Caco-2 (cell line): ENCODE measurements at regions of chr4 and their contacts with region 1.

Region 1: GRCh38 chr4:186021461-186022167 is 47.3 kb upstream of the TLR3 start:
- DNase-seq: peak in 1 of 2 experiments; percentile 23
- H3K4me3 ChIP-seq: no peak overlapping the region
- H3K4me3 Mint-ChIP-seq: no peak overlapping the region
- H3K27ac Mint-ChIP-seq: no peak overlapping the region
- H3K4me1 ChIP-seq: no peaks in the 10 kb centered on the region
- H3K4me1 Mint-ChIP-seq: peaks cover 6% of the 10 kb centered on the region
- H3K27me3 ChIP-seq: no peaks in the 10 kb centered on the region
- H3K27me3 Mint-ChIP-seq: no peaks in the 10 kb centered on the region
- CTCF ChIP-seq: peak; percentile 74 to 75

Region 2: DNA sequence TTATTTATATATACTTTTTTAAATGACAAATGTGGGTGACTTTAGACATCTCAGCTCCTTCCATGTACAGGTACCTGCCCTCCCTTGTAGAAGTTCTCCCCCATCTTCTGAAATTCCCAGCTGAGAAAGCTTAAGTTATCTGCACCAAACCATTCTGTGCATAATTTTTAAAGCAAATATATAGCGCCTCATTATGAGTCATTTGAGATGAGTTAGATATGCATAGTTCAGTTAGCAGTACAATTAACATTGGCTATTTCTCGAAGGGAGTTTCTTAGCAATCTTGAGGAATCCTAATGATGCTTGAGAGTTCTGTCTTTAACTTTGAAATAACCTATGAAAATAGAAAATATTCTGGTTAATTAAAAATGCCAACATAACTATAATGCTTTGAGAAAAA is 576.4 kb before region 1 on chr4:
- CTCF ChIA-PET with region 1: no interaction called
- POLR2A ChIA-PET with region 1: no interaction called
- intact Hi-C with region 1: no loop called
- DNase-seq: no peak
- H3K4me3 ChIP-seq: no peak overlapping the region
- H3K4me3 Mint-ChIP-seq: no peak overlapping the region
- H3K27ac Mint-ChIP-seq: no peak overlapping the region
- H3K4me1 ChIP-seq: no peaks in the 10 kb centered on the region
- H3K4me1 Mint-ChIP-seq: no peaks in the 10 kb centered on the region
- H3K27me3 ChIP-seq: no peaks in the 10 kb centered on the region
- H3K27me3 Mint-ChIP-seq: peaks cover 4% of the 10 kb centered on the region
- CTCF ChIP-seq: no peak

Region 3: DNA sequence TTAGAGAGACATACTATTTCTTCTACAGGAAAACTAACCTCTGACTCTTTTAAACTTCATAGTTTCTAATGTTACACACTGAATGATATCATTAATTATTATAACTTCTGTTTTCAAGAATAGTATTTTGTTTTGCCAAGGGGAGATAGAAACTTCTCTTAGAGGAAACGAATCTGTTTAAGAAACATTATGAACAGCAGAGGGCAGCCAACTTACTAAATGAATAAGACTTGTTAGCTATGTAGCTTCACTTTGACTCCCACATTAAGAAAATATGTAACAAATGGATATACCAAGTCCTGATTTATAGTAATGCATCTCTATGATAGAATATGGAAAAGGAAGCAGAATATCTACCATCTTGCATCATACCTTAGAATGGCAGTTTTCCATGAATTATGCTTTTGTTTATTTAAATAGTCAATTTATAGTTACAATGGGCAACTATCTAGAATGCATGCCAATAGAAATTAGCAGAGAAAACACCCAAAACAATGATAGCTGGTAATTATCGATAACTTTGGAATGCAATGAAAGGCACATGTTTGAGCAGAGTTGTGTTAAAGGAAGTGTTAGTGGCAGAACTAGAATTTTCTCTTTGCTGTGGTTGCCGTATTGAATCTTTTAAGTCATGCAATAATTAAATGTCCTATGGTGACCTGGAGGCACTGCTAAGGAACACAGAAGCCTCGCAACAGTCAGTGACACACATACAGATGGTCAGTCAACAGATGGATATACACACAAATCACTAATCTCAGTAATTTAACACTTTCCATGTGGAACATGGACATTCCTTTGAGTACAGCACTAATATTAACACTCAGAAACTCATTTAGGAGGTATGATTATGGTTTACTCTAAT is 380.6 kb before region 1 on chr4:
- CTCF ChIA-PET with region 1: interaction called, 22 read pairs
- POLR2A ChIA-PET with region 1: no interaction called
- intact Hi-C with region 1: loop called (anchors 1 kb)
- DNase-seq: peak in 1 of 2 experiments; percentile 42
- H3K4me3 ChIP-seq: no peak overlapping the region
- H3K4me3 Mint-ChIP-seq: no peak overlapping the region
- H3K27ac Mint-ChIP-seq: no peak overlapping the region
- H3K4me1 ChIP-seq: no peaks in the 10 kb centered on the region
- H3K4me1 Mint-ChIP-seq: peaks cover 16% of the 10 kb centered on the region
- H3K27me3 ChIP-seq: no peaks in the 10 kb centered on the region
- H3K27me3 Mint-ChIP-seq: no peaks in the 10 kb centered on the region
- CTCF ChIP-seq: peak; percentile 10 to 47

Region 4: DNA sequence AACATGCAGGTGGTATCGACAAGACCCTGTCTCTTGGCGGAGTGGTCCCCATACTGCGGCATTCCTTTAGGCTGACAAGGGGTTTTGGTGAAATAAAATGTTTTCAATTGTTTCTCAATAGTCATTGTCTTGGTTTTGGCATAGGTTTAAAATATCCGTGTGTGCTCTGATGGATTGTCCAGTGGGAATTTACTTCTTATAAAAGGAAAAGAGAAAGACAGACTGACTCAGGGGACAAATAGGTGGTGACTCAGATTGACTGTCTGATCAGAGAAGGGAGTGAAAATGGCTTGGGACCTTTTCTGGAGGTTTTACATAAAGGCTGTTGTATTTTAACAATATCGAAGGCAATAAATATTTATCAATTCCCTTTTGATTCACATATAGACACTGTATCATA is 339.4 kb before region 1 on chr4:
- CTCF ChIA-PET with region 1: no interaction called
- POLR2A ChIA-PET with region 1: no interaction called
- intact Hi-C with region 1: no loop called
- DNase-seq: no peak
- H3K4me3 ChIP-seq: no peak overlapping the region
- H3K4me3 Mint-ChIP-seq: no peak overlapping the region
- H3K27ac Mint-ChIP-seq: no peak overlapping the region
- H3K4me1 ChIP-seq: no peaks in the 10 kb centered on the region
- H3K4me1 Mint-ChIP-seq: no peaks in the 10 kb centered on the region
- H3K27me3 ChIP-seq: no peaks in the 10 kb centered on the region
- H3K27me3 Mint-ChIP-seq: no peaks in the 10 kb centered on the region
- CTCF ChIP-seq: no peak

Region 5: DNA sequence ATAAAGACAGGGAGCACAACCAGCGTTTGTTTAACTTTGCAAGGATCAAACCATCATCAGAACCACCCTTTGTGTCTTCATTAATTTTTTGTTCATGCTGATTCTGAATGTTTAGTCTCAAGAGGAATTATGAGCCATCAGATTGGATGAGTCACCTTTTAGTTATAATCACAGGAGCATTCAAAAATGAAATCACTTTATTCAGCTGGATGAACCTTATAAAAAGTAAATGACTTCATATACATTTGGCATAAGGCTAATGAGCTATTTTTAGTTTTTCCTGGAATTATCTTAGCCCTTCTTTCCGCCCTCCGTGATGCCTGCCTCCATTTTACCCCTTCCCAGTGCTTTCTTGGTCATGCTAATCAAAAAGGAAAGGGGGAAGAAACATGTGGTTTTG is 313.3 kb before region 1 on chr4:
- CTCF ChIA-PET with region 1: no interaction called
- POLR2A ChIA-PET with region 1: no interaction called
- intact Hi-C with region 1: no loop called
- DNase-seq: no peak
- H3K4me3 ChIP-seq: no peak overlapping the region
- H3K4me3 Mint-ChIP-seq: no peak overlapping the region
- H3K27ac Mint-ChIP-seq: no peak overlapping the region
- H3K4me1 ChIP-seq: peaks cover 19% of the 10 kb centered on the region
- H3K4me1 Mint-ChIP-seq: peaks cover 25% of the 10 kb centered on the region
- H3K27me3 ChIP-seq: no peaks in the 10 kb centered on the region
- H3K27me3 Mint-ChIP-seq: no peaks in the 10 kb centered on the region
- CTCF ChIP-seq: no peak

Region 6: GRCh38 chr4:185896823-185897488 is 124.7 kb before region 1 on chr4:
- CTCF ChIA-PET with region 1: no interaction called
- POLR2A ChIA-PET with region 1: no interaction called
- intact Hi-C with region 1: loop called (anchors 10 kb)
- DNase-seq: peak; percentile 32 to 63
- H3K4me3 ChIP-seq: no peak overlapping the region
- H3K4me3 Mint-ChIP-seq: peak overlapping the region; percentile 52
- H3K27ac Mint-ChIP-seq: peak overlapping the region; percentile 69
- H3K4me1 ChIP-seq: peaks cover 8% of the 10 kb centered on the region; the same call in 1 of the 2 replicates
- H3K4me1 Mint-ChIP-seq: peaks cover 7% of the 10 kb centered on the region
- H3K27me3 ChIP-seq: no peaks in the 10 kb centered on the region
- H3K27me3 Mint-ChIP-seq: no peaks in the 10 kb centered on the region
- CTCF ChIP-seq: no peak